Spleen (tissue), 13 donors: ENCODE measurements at regions of chrX and their contacts with region 1.

Region 1: DNA sequence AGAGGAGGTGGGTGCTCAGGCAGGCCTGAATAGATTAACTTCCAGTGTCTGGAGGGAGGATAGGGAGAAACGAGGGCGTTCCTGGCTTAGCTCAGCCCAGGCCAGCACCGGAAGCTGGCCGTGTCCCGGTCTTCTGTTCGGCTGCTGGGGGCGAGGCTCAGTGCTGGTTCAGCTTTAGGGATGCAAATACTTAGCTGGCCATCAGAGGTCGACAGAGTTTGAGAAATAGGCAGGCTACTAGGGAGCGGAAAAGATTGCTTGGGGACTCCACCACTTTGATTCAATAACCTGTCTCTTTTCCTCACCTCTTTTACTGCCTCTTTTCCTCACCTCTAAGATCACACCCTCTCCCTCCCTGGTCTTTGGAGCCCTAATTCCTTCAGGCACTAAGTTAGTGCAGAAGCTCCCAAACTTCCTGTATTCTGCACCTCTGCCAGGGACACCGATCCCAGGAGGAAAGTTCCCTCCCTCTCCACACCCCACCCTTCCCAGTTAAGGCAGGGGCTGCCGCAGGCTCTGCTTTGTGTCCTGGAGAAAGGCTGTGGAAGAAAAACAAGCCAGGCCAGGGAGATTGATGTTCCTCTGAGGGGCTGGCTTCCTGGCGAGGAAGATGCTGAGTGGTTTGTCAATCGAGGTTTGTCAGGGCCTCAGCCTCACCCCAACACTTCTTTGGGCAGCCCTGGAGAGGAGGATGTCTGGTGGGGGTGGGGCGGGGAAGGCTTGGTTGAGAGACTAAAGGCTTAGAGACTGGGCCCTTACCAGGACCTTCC is 6.0 kb upstream of the EFNB1 start:
- DNase-seq: no peak
- H3K4me3 ChIP-seq: no peak overlapping the region
- H3K27ac ChIP-seq: no peak overlapping the region
- H3K4me1 ChIP-seq: peaks cover 0 to 4% (median 0%) of the 10 kb centered on the region in 6 donors
- H3K27me3 ChIP-seq: peaks cover 0 to 12% (median 0%) of the 10 kb centered on the region in 7 donors
- CTCF ChIP-seq: peak in 8 of 11 experiments; percentile 18 to 60 (median 48)
- POLR2A ChIP-seq: no peak

Region 2: GRCh38 chrX:68762766-68763165 is 60.1 kb before region 1 on chrX:
- intact Hi-C with region 1: no loop called
- DNase-seq: no peak
- H3K4me3 ChIP-seq: no peak overlapping the region
- H3K27ac ChIP-seq: no peak overlapping the region
- H3K4me1 ChIP-seq: no peaks in the 10 kb centered on the region
- H3K27me3 ChIP-seq: no peaks in the 10 kb centered on the region
- CTCF ChIP-seq: no peak
- POLR2A ChIP-seq: no peak

Region 3: DNA sequence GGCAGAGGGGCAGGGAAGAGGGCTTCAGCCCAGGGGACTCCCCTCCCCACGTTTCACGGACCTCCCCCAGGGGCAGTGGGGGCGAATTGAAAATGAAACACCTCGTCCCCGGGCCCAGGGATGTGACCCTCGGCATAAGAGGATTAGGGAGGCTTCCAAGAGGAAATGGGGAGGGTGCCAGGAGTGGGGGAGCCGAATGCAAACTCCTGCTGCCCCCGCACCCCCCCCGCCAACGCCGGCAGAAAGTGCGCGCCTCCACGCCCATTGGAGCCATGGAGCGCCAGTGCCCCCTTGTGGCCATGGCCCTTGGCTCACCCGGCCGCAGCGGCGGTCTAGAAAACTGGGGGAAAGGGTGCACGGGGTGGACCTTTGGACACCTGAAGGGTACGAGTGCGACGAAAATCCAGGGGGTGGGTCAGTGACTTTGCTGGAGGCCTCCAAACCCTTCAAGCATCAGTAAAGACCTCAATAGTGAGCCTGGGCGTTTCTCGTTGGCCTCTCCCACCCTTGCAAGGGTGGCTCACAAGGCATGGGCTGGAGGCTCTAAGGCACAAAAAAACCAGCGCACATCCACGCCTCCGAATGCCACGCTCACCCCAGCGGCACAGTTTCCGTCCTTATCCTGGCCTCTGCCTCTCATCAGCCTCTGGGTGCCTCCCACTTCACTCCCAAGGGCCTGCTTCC is 463.2 kb after region 1 on chrX:
- intact Hi-C with region 1: loop called (anchors 5 kb)
- DNase-seq: peak; percentile 88
- H3K4me3 ChIP-seq: peak overlapping the region in 5 of 8 donors; percentile 23 to 60 (median 33)
- H3K27ac ChIP-seq: peak overlapping the region in 2 of 8 donors; percentile 5 to 46
- H3K4me1 ChIP-seq: peaks cover 0 to 11% (median 5%) of the 10 kb centered on the region in 6 donors
- H3K27me3 ChIP-seq: peaks cover 0 to 39% (median 0%) of the 10 kb centered on the region in 7 donors
- CTCF ChIP-seq: peak; percentile 33 to 89 (median 80)
- POLR2A ChIP-seq: no peak